H1 (cell line): ENCODE measurements at regions of chr9 and their contacts with region 1.

Region 1: GRCh38 chr9:27726244-27727081 is 153.2 kb upstream of the C9orf72 start:
- DNase-seq: peak; percentile 56 to 76
- H3K4me3 ChIP-seq: no peak overlapping the region
- H3K27ac ChIP-seq: no peak overlapping the region
- H3K4me1 ChIP-seq: peaks cover 0 to 14% (median 4%) of the 10 kb centered on the region in 4 experiments; a peak in 3 of 7 replicates
- H3K27me3 ChIP-seq: no peaks in the 10 kb centered on the region
- CTCF ChIP-seq: peak; percentile 5 to 93 (median 86)
- EP300 ChIP-seq: no peak
- POLR2A ChIP-seq: no peak
- RAD21 ChIP-seq: peak; percentile 100

Region 2: DNA sequence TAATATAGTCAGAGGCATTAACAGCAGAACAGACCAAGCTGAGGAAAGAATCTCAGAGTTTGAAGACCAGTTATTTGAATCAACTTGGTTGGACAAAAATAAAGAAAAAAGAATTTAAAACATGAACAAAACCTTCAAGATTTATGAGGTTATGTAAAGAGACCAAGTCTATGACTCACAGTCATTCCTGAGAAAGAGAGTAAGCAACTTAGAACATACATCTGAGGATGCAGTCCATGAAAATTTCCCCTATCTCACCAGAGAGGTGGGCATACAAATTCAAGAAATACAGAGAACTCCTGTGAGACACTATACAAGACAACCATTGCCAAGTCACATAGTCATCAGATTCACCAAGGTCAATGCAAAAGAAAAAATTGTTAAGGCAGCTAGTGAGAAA is 135.8 kb before region 1 on chr9:
- CTCF ChIA-PET with region 1: no interaction called
- POLR2A ChIA-PET with region 1: no interaction called
- DNase-seq: no peak
- H3K4me3 ChIP-seq: no peak overlapping the region
- H3K27ac ChIP-seq: no peak overlapping the region
- H3K4me1 ChIP-seq: no peaks in the 10 kb centered on the region
- H3K27me3 ChIP-seq: no peaks in the 10 kb centered on the region
- CTCF ChIP-seq: no peak
- EP300 ChIP-seq: no peak
- POLR2A ChIP-seq: no peak
- RAD21 ChIP-seq: no peak

Region 3: GRCh38 chr9:27747450-27747849 is 21.0 kb after region 1 on chr9:
- CTCF ChIA-PET with region 1: interaction called, 11 read pairs
- POLR2A ChIA-PET with region 1: no interaction called
- DNase-seq: no peak
- H3K4me3 ChIP-seq: no peak overlapping the region
- H3K27ac ChIP-seq: no peak overlapping the region
- H3K4me1 ChIP-seq: peaks cover 7 to 23% (median 14%) of the 10 kb centered on the region in 4 experiments
- H3K27me3 ChIP-seq: no peaks in the 10 kb centered on the region
- CTCF ChIP-seq: no peak
- EP300 ChIP-seq: no peak
- POLR2A ChIP-seq: no peak
- RAD21 ChIP-seq: no peak

Region 4: GRCh38 chr9:27787891-27788290 is 61.4 kb after region 1 on chr9:
- CTCF ChIA-PET with region 1: interaction called, 30 read pairs
- POLR2A ChIA-PET with region 1: no interaction called
- DNase-seq: peak in 1 of 2 experiments; percentile 17
- H3K4me3 ChIP-seq: no peak overlapping the region
- H3K27ac ChIP-seq: no peak overlapping the region
- H3K4me1 ChIP-seq: no peaks in the 10 kb centered on the region
- H3K27me3 ChIP-seq: no peaks in the 10 kb centered on the region
- CTCF ChIP-seq: peak; percentile 9 to 63 (median 47)
- EP300 ChIP-seq: no peak
- POLR2A ChIP-seq: no peak
- RAD21 ChIP-seq: peak; percentile 62 to 68

Region 5: DNA sequence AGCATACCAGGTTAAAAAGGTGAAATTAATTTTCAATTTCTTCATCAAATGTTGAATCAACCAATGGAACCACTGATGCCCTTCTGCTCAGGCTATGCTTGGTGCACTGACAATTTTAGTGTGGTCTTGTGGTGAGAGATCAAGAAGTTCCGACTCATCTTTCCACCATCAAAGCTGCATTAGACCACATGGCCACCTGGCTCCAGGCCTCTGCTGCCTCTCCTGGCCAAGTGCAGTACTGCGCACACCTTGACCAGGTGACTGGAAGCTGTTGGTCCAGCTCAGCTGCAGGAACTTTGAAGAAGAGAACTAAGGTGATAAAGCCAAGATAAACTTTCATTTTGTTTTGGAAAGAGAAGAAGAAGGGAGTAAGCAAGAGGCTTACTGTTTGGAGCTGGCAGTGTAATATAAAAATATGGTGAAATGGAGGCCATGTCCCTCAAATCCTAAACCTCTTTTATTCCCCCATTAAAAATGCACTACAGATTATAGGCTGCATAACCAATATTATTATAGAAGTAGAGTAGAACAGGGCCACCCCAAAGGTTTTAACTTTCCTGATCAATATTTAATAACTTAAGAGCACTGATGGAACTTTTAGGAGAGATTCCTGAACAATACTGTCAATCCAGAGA is 162.3 kb after region 1 on chr9:
- CTCF ChIA-PET with region 1: interaction called, 24 read pairs
- POLR2A ChIA-PET with region 1: no interaction called
- DNase-seq: peak; percentile 36 to 91
- H3K4me3 ChIP-seq: no peak overlapping the region
- H3K27ac ChIP-seq: no peak overlapping the region
- H3K4me1 ChIP-seq: no peaks in the 10 kb centered on the region
- H3K27me3 ChIP-seq: no peaks in the 10 kb centered on the region
- CTCF ChIP-seq: peak; percentile 60 to 96 (median 94)
- EP300 ChIP-seq: no peak
- POLR2A ChIP-seq: no peak
- RAD21 ChIP-seq: peak; percentile 74 to 78